Body of pancreas (tissue), 4 donors: ENCODE measurements at regions of chr7 and their contacts with region 1.

Region 1: DNA sequence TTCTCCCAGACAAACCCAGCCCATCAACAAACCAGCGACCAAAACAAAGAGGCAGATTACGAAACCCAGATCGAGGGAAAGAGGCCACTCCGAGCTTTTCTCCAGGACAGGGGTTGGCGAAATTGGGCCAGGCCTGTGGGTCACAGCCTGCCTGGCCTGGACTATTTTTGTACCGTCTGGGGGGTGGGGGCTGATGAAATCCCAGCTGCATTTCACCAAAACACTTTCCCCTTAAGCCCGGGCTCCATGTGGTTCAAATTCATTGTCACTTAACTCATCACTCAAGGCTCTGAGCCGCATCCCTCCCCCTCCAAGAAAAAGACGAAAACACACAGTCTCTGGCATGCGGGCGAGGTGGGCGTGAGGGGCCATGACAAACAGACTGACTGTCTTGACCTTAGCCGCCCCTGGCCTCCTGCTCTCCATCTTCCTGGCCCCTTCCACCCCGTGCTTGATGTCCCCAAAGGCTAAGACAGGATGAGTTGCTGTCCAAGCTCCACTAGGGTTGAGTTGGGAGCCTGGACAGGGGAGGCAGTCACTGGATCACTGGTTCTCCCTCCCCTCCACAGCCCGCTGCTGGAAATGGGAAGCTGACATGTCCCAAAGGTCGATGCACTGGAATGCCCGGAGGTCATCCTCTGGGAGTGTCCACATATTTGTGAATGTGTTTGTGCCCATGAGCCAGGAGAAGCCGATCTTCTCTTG is 19.2 kb downstream of the TMEM270 start:
- DNase-seq: peak in 2 of 4 donors; percentile 28 to 35
- ATAC-seq: peak; percentile 55
- H3K4me3 ChIP-seq: no peak overlapping the region
- H3K27ac ChIP-seq: no peak overlapping the region
- H3K4me1 ChIP-seq: no peaks in the 10 kb centered on the region
- H3K27me3 ChIP-seq: no peaks in the 10 kb centered on the region
- CTCF ChIP-seq: no peak
- POLR2A ChIP-seq: no peak

Region 2: DNA sequence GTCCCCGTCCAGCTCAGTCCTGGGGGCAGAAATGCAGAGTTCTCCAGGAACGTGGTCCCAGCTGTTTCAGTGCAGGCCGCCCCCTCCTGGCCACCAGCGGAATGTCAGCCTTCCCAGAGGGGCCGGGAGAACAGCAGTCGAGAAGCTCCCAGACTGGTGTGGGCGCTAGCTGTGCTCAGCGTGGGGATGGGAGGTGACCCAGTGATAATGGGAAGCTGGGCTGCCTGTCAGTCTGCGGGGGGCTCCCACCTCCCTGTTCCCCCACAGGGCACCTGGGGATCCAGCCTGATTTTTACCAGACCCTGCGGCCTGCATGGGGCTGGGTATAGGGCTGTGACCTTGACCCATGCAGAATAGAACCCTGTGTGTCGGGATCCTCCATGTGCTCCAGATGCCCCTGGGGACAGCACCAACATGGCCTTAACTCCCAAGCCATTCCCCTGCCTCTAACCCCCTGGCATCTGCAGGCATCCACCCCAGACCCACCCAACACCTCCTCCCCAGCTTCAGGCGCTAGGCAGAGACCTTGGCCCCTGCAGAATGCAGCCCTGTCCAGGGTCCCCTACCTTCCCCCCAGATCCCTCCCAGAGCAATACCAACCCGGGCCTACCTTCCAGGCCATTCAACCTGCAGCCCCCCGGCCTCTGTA is 146.9 kb after region 1 on chr7:
- intact Hi-C with region 1: loop called (anchors 10 kb)
- DNase-seq: peak; percentile 80 to 87 (median 82)
- ATAC-seq: peak; percentile 62
- H3K4me3 ChIP-seq: no peak overlapping the region
- H3K27ac ChIP-seq: peak overlapping the region; percentile 83 to 90 (median 84)
- H3K4me1 ChIP-seq: peaks cover 40% of the 10 kb centered on the region
- H3K27me3 ChIP-seq: no peaks in the 10 kb centered on the region
- CTCF ChIP-seq: peak; percentile 86 to 96 (median 93)
- POLR2A ChIP-seq: no peak